Lower lobe of right lung (tissue), 2 donors: ENCODE measurements at regions of chr1 and their contacts with region 1.

Region 1: GRCh38 chr1:151294742-151295462 is 12.8 kb downstream of the ZNF687 start:
- DNase-seq: peak; percentile 3
- ATAC-seq: no peak
- H3K4me3 ChIP-seq: no peak overlapping the region
- H3K27ac ChIP-seq: no peak overlapping the region
- H3K4me1 ChIP-seq: no peaks in the 10 kb centered on the region
- H3K27me3 ChIP-seq: no peaks in the 10 kb centered on the region
- CTCF ChIP-seq: no peak

Region 2: DNA sequence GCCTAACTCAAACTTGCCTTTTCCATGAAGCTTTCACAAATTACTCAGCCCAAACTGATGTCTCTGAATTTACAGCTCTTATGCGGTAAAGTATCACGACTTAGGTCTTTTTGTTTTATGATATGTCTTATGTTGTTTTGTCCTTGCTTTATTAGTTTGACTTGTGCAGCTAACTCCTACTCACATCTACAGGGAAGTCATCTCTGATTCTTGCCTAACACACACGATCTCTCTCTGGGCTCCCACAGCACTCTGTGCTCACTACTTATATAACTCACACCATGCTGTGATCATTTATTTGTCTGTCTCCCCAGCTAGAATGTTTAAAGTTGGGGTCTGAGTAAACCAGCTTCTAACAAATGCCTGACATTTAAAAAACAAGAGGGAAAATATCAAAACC is 41.7 kb after region 1 on chr1:
- intact Hi-C with region 1: loop called (anchors 5 kb)
- DNase-seq: no peak
- ATAC-seq: no peak
- H3K4me3 ChIP-seq: no peak overlapping the region
- H3K27ac ChIP-seq: no peak overlapping the region
- H3K4me1 ChIP-seq: peaks cover 9% of the 10 kb centered on the region
- H3K27me3 ChIP-seq: no peaks in the 10 kb centered on the region
- CTCF ChIP-seq: no peak

Region 3: GRCh38 chr1:151653397-151653796 is 358.5 kb after region 1 on chr1:
- intact Hi-C with region 1: no loop called
- DNase-seq: no peak
- ATAC-seq: peak; percentile 79 to 82
- H3K4me3 ChIP-seq: no peak overlapping the region
- H3K27ac ChIP-seq: peak overlapping the region; percentile 37
- H3K4me1 ChIP-seq: peaks cover 28% of the 10 kb centered on the region
- H3K27me3 ChIP-seq: no peaks in the 10 kb centered on the region
- CTCF ChIP-seq: no peak